Tibial artery (tissue), 4 donors: ENCODE measurements at regions of chr12 and their contacts with region 1.

Region 1: DNA sequence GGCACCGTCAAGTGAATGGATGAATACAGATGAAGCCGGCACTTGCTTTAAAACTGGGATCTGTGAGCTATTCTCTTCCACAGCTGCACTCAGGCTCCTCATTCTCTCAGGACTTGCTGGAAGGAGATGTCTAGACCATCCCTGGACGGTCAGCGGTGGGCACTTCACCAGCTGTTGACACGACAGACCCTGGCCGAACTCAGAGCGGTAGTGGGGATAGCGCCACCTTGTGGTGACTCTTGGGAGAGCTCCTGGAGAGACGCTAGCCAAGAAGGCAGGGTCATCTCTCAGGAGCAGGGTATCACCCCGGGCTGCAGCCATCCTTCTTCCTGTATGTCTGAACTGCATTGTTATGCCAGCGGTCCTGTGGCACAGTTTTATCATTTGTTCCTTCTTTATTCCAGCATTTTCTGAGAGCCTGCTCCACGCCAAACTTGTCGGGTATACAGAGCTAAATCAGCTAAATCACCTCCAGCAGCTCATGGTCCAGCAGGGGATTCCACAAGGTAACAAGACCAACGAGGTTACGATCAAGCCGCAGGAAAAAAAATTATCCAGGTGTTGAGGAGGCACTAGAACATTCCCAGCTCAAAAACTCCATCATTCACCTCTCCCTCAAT is 10.0 kb downstream of the WNT1 start:
- DNase-seq: no peak
- H3K4me3 ChIP-seq: no peak overlapping the region
- H3K27ac ChIP-seq: no peak overlapping the region
- H3K4me1 ChIP-seq: peaks cover 0 to 14% (median 11%) of the 10 kb centered on the region in 4 donors
- H3K27me3 ChIP-seq: peaks cover 0 to 48% of the 10 kb centered on the region in 2 donors
- CTCF ChIP-seq: peak; percentile 66 to 74

Region 2: DNA sequence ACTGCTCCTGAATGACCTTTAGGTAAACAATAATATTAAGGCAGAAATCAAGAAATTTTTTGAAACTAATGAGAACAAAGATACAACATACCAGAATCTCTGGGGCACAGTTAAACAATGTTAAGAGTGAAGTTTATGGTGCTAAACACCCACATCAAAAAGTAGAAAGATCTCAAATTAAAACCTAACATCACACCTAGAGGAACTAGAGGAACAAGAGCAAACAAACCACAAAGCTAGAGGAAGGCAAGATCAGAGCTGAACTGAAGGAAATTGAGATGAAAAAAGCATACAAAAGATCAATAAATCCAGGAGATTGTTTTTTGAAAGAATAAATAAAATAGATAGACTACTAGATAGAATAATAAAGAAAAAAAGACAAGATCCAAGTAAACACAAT is 455.5 kb before region 1 on chr12:
- intact Hi-C with region 1: no loop called
- DNase-seq: no peak
- H3K4me3 ChIP-seq: no peak overlapping the region
- H3K27ac ChIP-seq: no peak overlapping the region
- H3K4me1 ChIP-seq: no peaks in the 10 kb centered on the region
- H3K27me3 ChIP-seq: no peaks in the 10 kb centered on the region
- CTCF ChIP-seq: no peak

Region 3: GRCh38 chr12:48865434-48866290 is 122.5 kb before region 1 on chr12 and contains the start of gene RND1:
- intact Hi-C with region 1: loop called (anchors 10 kb)
- DNase-seq: peak; percentile 92 to 95
- H3K4me3 ChIP-seq: peak within 1 kb of the TSS; percentile 56 to 69
- H3K27ac ChIP-seq: peak within 1 kb of the TSS; percentile 41 to 48
- H3K4me1 ChIP-seq: peaks cover 0 to 12% (median 9%) of the 10 kb centered on the region in 4 donors
- H3K27me3 ChIP-seq: peaks cover 0 to 30% of the 10 kb centered on the region in 2 donors
- CTCF ChIP-seq: no peak